ENCODE measurements at regions of chr5 and their contacts with region 1.

Region 1: DNA sequence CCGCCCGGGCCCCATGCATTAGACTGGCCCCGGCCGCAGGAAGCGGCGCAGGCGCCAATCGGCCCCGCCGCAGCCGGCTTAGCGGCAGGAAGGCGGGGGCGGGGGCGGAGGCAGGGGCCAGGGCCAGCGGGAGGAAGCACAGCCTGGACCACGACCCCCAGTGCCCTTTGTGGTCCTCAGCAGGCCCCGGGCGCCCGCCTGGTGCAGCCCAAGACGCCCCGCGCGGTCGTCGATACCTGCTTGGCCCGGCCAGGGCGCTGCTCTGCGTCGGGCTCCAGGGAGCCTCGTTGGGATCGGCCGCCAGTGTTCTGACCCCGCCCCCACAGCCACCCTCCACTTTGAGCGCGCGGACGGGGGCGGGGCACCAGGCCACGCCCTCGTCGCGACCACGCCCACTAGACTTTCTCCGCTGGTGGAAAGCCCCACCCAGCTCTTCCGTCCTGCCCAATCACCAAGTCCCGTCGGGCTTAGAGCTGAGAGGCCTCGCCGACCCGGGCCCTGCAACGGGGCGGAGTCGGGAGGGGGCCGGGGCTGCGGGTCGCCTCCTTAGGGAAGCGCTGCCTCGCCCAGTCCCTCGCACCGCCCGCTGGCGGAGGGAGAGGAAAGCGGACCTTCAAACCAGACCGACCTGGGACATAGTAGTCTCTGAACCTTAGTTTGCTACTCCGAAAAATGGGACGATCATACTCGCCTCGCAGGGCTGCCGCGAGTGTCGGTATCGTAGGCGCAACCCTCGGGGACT is at the start of gene PDLIM7:
- DNase-seq: peak; percentile 99
- H3K4me3 ChIP-seq: peak within 1 kb of the TSS; percentile 66 to 97 (median 86)
- H3K27ac ChIP-seq: peak within 1 kb of the TSS; percentile 95 to 99 (median 97)
- H3K4me1 ChIP-seq: peaks cover 0 to 67% (median 57%) of the 10 kb centered on the region in 4 donors
- H3K27me3 ChIP-seq: no peaks in the 10 kb centered on the region
- CTCF ChIP-seq: no peak
- EP300 ChIP-seq: no peak
- POLR2A ChIP-seq: peak; percentile 80 to 84
- total RNA-seq, gene PDLIM7: 274 to 923 (median 482) TPM

Region 2: DNA sequence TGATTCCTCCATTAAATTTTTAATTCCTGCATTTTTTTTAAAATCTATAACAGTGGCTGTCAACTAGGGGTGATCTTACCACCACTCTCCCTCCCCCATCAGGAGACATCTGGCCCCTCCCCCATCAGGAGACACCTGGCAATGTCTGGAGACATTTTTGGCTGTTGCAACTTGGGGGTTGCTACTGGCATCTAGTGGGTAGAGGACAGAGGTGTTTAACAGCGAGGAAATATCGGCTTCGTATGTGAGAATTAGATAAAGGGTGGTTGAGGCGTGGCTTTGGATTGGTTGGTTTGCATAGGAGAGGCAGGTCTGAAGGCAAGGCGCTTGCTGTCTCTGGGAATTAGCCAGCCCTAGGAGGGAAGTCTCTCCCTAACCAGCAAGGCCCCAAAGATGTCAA is 937.8 kb before region 1 on chr5:
- intact Hi-C with region 1: no loop called
- DNase-seq: no peak
- H3K4me3 ChIP-seq: no peak overlapping the region
- H3K27ac ChIP-seq: no peak overlapping the region
- H3K4me1 ChIP-seq: no peaks in the 10 kb centered on the region
- H3K27me3 ChIP-seq: peaks cover 0 to 7% (median 0%) of the 10 kb centered on the region in 3 donors
- CTCF ChIP-seq: no peak
- EP300 ChIP-seq: no peak
- POLR2A ChIP-seq: no peak

Region 3: GRCh38 chr5:177220576-177220975 is 276.9 kb before region 1 on chr5:
- intact Hi-C with region 1: no loop called
- DNase-seq: no peak
- H3K4me3 ChIP-seq: no peak overlapping the region
- H3K27ac ChIP-seq: no peak overlapping the region
- H3K4me1 ChIP-seq: no peaks in the 10 kb centered on the region
- H3K27me3 ChIP-seq: no peaks in the 10 kb centered on the region
- CTCF ChIP-seq: no peak
- EP300 ChIP-seq: no peak
- POLR2A ChIP-seq: no peak

Region 4: DNA sequence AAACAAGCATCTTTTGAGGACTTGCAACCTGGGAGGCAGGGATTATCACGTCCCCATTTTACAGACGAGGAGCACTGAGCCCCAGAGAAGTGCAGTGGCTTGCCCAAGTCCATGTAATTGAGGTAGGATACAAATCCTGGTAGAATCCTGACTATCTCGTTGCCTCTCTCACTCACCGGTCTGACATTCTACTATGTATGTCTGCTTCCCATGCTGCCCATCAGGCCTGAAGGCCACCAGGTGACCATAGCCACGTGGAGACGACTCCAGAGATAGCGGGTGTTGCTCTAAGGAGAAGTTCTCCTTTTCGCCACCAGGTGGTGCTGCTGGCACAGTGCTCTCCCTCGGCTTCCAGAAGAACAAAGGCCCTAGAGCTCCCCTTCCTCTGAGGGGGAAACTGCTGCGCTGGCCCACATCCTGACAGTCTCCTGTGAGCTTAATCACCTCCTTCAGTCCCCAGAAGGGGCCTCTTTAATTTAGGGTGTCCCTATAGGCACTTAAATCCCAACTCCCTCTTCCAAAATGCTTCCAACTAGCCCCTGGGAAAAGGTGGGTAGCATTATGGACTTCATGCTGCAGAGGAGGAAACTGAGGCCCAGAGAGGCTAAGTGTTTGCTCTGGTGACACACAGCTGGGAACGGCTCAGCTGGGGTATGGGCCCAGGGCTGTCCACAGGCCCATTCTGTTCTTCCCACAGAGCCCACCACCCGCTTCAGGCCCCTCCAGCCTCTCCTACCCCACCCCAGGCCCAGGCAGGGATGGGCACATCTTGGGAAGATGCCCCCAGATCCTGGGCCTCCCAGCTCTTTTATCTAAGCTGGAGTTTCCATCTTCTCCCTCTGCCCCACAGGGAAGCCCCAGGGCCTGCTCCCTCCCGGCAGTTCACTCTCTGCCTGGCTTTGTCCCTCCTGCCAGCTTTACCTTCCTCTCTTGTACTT is 106.8 kb before region 1 on chr5:
- intact Hi-C with region 1: loop called (anchors 1 kb)
- DNase-seq: peak; percentile 89
- H3K4me3 ChIP-seq: no peak overlapping the region
- H3K27ac ChIP-seq: peak overlapping the region in 1 of 4 donors; percentile 6
- H3K4me1 ChIP-seq: peaks cover 0 to 4% (median 0%) of the 10 kb centered on the region in 4 donors
- H3K27me3 ChIP-seq: peaks cover 0 to 21% (median 4%) of the 10 kb centered on the region in 3 donors
- CTCF ChIP-seq: peak; percentile 95 to 98 (median 96)
- EP300 ChIP-seq: no peak
- POLR2A ChIP-seq: no peak

Region 5: DNA sequence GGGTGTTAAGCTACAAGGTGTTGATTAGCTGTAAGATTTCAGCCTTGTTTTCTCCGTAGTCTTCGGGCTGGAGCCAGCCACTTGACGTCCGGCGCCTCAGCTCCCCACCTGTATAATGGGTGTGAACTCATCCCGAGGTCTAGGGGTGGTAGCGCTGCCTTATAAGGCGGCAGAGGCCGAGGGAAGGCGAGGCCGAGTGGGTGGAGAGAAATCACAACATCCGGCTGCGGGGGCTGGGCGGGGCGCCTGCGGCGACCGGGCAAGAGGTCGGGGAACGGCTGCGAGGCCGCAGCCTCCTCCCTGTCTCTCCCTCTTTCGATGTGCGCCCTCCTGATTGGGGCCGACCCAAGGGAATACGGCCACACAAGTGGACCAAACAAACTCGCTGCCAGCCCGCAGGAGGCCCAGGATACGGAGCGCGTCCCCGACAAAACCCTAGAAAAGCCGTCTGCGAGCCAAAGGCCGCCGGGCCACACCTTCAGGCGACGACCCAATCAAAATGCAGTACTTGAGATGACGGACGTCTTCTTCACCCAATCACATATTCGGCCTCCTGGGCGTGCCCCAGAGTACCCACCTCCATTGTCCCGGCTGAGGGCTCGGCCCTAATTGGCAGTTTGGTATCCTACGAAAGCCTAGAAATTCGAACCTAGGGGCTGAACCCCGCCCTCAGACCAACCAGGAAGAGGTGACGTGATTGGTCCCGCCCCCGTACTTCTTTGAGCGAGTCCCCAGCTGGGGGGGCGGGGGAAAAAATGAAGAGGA is 71.5 kb before region 1 on chr5:
- intact Hi-C with region 1: loop called (anchors 2 kb)
- DNase-seq: peak; percentile 100
- H3K4me3 ChIP-seq: peak overlapping the region; percentile 40 to 53 (median 52)
- H3K27ac ChIP-seq: peak overlapping the region; percentile 89 to 95 (median 92)
- H3K4me1 ChIP-seq: peaks cover 0 to 37% (median 32%) of the 10 kb centered on the region in 4 donors
- H3K27me3 ChIP-seq: no peaks in the 10 kb centered on the region
- CTCF ChIP-seq: no peak
- EP300 ChIP-seq: no peak
- POLR2A ChIP-seq: peak; percentile 72 to 91

Region 6: GRCh38 chr5:177516604-177517568 is 19.4 kb after region 1 on chr5 and contains the start of gene DDX41:
- intact Hi-C with region 1: loop called (anchors 2 kb)
- DNase-seq: peak; percentile 99
- H3K4me3 ChIP-seq: peak within 1 kb of the TSS; percentile 64 to 90 (median 84)
- H3K27ac ChIP-seq: peak within 1 kb of the TSS; percentile 85 to 89 (median 86)
- H3K4me1 ChIP-seq: peaks cover 0 to 35% (median 16%) of the 10 kb centered on the region in 4 donors
- H3K27me3 ChIP-seq: no peaks in the 10 kb centered on the region
- CTCF ChIP-seq: no peak
- EP300 ChIP-seq: peak in 1 of 4 donors; percentile 71
- POLR2A ChIP-seq: no peak
- total RNA-seq, gene DDX41: 47.8 to 55.1 (median 51.6) TPM